ENCODE measurements at regions of chr14 and their contacts with region 1.

Region 1: DNA sequence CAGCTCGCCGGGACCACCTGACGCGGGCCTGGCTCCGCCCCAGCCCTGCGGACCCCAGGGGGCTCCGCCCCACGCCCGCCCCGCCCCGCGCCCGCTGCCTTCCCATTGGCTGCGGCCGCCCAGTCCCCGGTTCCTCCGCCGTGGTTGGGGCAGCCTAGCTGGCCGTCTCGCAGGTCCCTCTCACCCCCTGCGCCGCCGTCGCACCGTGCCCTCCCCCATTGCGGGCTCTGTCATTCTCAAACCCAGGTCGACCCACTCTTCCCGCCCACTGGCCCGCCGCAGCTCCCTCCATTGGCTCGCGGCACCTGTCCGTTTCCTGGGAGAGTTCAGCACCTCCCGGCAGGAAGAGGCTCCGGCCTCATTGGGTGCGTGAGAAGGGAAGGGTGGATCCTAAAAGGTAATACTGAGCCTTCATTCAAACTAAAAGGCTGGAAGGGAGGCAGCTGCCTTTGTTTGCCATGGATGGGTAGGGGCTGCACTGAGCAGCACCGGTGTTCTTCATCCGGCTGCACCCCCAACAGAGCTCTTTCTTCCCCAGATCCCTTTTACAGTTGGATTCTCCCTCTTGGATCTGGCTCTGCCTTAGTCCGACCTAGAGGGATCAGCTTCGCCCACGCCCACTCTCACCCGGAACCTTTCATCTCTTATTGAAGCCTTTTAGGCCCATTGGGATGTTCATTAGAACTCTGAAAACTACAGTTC is 381 bp upstream of the MAP3K9 start:
- DNase-seq: peak; percentile 75 to 95
- H3K4me3 ChIP-seq: peak overlapping the region; percentile 37
- CTCF ChIP-seq: no peak
- POLR2A ChIP-seq: no peak

Region 2: GRCh38 chr14:69879175-69880043 is 930.3 kb before region 1 on chr14 and contains the start of gene SMOC1:
- intact Hi-C with region 1: no loop called
- DNase-seq: no peak
- H3K4me3 ChIP-seq: no peak within 1 kb of the TSS
- CTCF ChIP-seq: no peak
- POLR2A ChIP-seq: no peak
- total RNA-seq, gene SMOC1: 1.1 to 5.4 (median 1.9) TPM

Region 3: DNA sequence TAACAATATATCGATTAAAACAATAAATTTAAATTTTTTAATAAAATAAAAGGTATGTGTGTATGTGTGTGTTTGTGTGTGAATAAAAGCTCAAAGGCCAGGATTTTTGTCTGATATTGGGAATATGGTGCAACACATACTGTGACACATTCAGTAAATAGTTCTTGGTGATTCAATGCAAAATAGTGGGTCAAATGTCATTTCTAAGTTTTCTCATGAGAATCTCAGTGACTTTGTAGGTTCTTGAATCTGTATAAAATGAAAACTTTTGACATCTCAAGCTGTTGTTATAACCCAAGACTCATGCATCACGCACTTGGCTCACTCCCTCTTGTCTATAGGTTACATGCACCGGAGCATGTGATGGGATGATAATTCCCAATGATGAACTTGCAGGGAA is 193.0 kb before region 1 on chr14:
- intact Hi-C with region 1: loop called (anchors 10 kb)
- DNase-seq: no peak
- H3K4me3 ChIP-seq: no peak overlapping the region
- CTCF ChIP-seq: no peak
- POLR2A ChIP-seq: no peak